ENCODE measurements at regions of chr11 and their contacts with region 1.

Region 1: DNA sequence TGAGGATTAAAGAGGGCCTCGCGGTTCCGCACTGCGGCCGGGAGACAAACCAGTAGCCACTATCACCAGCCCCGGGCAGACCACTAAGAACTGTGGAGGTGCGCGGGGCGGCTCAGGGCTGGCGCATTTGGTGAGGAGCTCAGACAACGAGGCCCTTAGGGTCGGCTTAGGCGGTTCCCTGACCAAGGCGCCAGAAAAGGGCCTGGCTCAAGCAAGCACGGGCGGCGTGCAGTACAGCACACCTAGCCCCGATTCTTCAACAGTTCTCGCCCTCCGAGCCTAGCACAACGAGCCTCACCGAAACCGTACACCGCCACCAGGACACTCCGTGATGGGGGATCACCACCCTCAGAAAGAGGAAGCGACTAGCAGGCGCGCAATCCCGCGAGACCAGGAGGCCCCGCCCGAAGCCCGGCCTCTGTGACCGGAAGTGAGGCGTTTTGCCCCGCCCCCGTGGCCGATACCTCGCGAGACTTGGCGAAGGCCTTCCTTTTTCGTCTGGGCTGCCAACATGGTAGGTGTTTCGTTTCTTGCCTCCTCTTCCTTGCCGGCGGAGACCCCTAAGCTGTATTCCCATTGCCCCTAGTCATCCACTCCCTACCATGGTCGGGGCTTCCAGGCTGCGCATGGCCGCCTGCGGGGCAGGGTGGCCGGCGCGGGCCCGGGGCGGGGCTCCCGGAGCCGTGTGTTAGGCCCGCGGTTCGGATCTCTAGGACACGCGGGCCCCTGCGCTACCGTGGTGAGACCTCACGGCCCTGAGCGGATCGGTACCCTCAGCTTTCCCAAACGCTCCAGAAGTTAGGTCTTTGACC is at the starts of genes RPL27A and TRIM66:
- DNase-seq: peak; percentile 100
- H3K4me3 Mint-ChIP-seq: peak within 1 kb of the TSS; percentile 97
- H3K27ac Mint-ChIP-seq: peak within 1 kb of the TSS; percentile 95
- H3K4me1 Mint-ChIP-seq: peaks cover 30% of the 10 kb centered on the region
- H3K27me3 Mint-ChIP-seq: no peaks in the 10 kb centered on the region
- total RNA-seq, gene RPL27A: 738 and 745 TPM in 2 replicates
- total RNA-seq, gene TRIM66: 11.9 and 13.4 TPM in 2 replicates

Region 2: DNA sequence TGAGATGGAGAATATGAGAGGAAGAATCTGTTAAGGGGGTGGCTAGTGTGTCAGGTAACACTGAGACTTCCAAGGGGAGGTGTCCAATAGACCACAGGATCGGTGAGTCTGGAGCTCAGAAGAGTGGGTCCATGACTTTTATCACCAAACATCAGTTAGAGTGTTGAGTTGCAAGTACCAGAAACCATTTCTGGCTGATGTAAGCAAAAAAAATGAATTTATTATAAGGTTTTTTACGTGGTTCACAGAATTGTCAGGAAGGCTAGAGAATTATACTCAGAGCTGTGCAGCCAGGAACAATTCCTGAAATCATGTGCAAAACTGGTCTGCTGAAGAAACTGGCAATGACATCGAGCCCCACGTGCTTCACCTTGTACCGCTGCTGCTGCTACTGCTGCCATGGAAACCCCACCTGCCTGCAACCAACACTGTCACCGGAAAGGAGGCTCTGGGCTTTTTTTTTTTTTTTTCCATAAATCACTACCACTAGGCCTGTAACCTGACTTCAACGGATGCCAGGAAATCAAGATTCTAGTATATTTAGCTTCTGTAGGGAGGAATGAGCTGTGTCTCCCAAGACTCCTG is 71.9 kb before region 1 on chr11:
- intact Hi-C with region 1: loop called (anchors 5 kb)
- DNase-seq: peak; percentile 88
- H3K4me3 Mint-ChIP-seq: no peak overlapping the region
- H3K27ac Mint-ChIP-seq: peak overlapping the region; percentile 70
- H3K4me1 Mint-ChIP-seq: peaks cover 14% of the 10 kb centered on the region
- H3K27me3 Mint-ChIP-seq: peaks cover 4% of the 10 kb centered on the region

Region 3: GRCh38 chr11:8661001-8661795 is 21.3 kb before region 1 on chr11:
- intact Hi-C with region 1: no loop called
- DNase-seq: no peak
- H3K4me3 Mint-ChIP-seq: no peak overlapping the region
- H3K27ac Mint-ChIP-seq: no peak overlapping the region
- H3K4me1 Mint-ChIP-seq: no peaks in the 10 kb centered on the region
- H3K27me3 Mint-ChIP-seq: no peaks in the 10 kb centered on the region

Region 4: GRCh38 chr11:8709002-8709672 is 26.6 kb after region 1 on chr11:
- intact Hi-C with region 1: no loop called
- DNase-seq: no peak
- H3K4me3 Mint-ChIP-seq: no peak overlapping the region
- H3K27ac Mint-ChIP-seq: no peak overlapping the region
- H3K4me1 Mint-ChIP-seq: peaks cover 2% of the 10 kb centered on the region
- H3K27me3 Mint-ChIP-seq: no peaks in the 10 kb centered on the region

Region 5: GRCh38 chr11:9092853-9093778 is 410.6 kb after region 1 on chr11:
- intact Hi-C with region 1: no loop called
- DNase-seq: no peak
- H3K4me3 Mint-ChIP-seq: peak overlapping the region; percentile 58
- H3K27ac Mint-ChIP-seq: no peak overlapping the region
- H3K4me1 Mint-ChIP-seq: peaks cover 2% of the 10 kb centered on the region
- H3K27me3 Mint-ChIP-seq: peaks cover 57% of the 10 kb centered on the region

Measured in activated CD4-positive, alpha-beta T cell treated with anti-CD3 and anti-CD28 coated beads, Interleukin-2, amount 10 ng/mL, durations not matched to agents 24 days and 14 days (primary cell).